Gastrocnemius medialis (tissue), 4 donors: ENCODE measurements at regions of chr16 and their contacts with region 1.

Region 1: GRCh38 chr16:89867918-89868317 is 5.5 kb upstream of the TCF25 start:
- DNase-seq: no peak
- ATAC-seq: no peak
- H3K4me3 ChIP-seq: no peak overlapping the region
- H3K27ac ChIP-seq: no peak overlapping the region
- H3K4me1 ChIP-seq: peaks cover 5 to 10% of the 10 kb centered on the region in 2 donors
- H3K27me3 ChIP-seq: no peaks in the 10 kb centered on the region
- CTCF ChIP-seq: no peak
- POLR2A ChIP-seq: no peak

Region 2: DNA sequence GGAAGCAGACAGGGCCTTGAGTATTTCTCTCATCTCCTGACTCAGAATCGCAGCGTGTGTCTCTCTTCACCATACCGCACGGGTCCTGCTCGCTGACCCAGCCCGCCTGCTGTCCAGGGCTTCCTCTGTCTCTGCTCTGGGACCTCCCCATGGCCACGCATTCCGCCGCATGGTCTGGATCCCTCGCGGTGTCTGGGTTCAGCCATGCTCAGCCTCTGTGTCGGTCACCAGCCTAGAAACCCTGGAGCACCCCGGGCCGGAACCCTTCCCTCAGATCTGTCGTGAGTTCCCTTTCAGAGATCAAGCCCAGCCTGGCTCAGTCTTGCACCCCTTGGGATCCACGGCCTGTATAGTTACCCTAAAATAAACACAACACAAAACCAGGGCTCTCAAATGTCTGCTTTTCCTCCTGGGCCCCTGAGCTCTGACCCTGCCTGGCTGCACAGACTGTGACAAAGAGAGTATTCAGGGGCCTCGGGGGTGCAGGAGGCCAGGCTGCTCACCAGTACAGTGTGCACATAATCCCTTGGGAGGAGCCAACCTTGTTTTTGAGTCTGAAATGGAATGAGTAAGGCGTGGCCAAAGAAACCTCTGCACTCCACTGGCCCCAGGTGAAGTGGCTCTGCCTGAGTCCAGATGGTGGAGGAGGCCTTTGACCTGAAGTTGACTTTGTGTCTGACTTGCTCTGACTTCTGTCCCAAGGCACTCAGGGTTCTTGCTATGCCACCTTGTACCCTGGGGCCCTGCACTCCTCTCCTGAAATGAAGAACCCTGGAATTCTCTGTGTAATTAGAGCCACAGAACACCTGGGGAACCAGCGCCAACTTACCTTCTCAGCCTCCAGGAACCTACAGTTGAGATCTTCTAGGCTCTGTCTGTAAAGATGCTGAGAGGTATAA is 45.5 kb before region 1 on chr16:
- in situ Hi-C with region 1: loop called in 1 of 4 experiments (anchors 5 kb)
- intact Hi-C with region 1: no loop called
- DNase-seq: no peak
- ATAC-seq: no peak
- H3K4me3 ChIP-seq: no peak overlapping the region
- H3K27ac ChIP-seq: no peak overlapping the region
- H3K4me1 ChIP-seq: peaks cover 0 to 1% of the 10 kb centered on the region in 2 donors
- H3K27me3 ChIP-seq: peaks cover 0 to 4% (median 0%) of the 10 kb centered on the region in 3 donors
- CTCF ChIP-seq: no peak
- POLR2A ChIP-seq: no peak

Region 3: GRCh38 chr16:89981414-89981813 is 113.5 kb after region 1 on chr16:
- in situ Hi-C with region 1: no loop called
- intact Hi-C with region 1: no loop called
- DNase-seq: no peak
- ATAC-seq: no peak
- H3K4me3 ChIP-seq: no peak overlapping the region
- H3K27ac ChIP-seq: peak overlapping the region in 3 of 4 donors; percentile 54 to 78 (median 70)
- H3K4me1 ChIP-seq: peaks cover 10 to 17% of the 10 kb centered on the region in 2 donors
- H3K27me3 ChIP-seq: no peaks in the 10 kb centered on the region
- CTCF ChIP-seq: no peak
- POLR2A ChIP-seq: no peak